Activated CD4-positive, alpha-beta T cell treated with anti-CD3 and anti-CD28 coated beads for 36 hours (primary cell): ENCODE measurements at regions of chr17 and their contacts with region 1.

Region 1: DNA sequence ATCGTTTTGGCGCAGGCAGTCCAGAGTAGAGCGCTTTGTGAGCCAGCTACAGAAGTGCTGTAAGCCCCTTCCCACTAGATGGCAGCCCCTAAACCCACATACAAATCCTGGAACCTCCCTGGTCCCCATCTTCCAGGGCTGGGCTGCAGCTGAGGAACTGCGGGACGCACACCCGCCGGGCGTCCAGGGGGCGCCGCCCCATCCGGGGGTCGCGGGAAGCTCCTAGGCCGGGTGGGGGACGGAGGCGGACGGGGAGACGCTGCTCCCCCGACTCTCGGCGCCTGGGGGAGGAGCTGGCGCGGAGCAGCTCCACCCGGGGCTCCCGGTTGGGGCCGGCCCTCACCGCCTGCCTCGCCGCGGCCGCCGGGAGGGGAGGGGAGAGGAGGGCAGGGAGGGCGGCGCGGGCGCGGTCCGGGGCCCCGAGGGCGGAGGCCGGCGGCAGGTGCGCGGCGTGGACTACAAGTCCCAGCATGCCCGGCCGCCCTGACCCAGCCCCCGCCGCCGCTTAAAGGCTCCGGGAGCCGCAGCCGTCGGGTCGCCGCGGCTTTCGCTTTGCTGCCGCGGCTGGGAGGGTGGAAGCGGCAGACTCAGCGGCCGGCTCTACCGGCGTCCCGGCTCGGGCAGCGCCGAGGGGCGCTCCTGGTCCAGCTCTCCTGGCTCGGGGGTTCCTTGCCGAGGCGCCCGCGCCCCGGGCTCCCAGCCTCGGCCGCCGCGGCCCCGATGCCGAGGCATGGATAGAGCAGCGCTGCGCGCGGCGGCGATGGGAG is at the start of gene KSR1:
- DNase-seq: peak; percentile 92
- ATAC-seq: peak; percentile 93
- H3K4me3 Mint-ChIP-seq: peak within 1 kb of the TSS; percentile 88
- H3K27ac Mint-ChIP-seq: peak within 1 kb of the TSS; percentile 83
- H3K4me1 Mint-ChIP-seq: peaks cover 43% of the 10 kb centered on the region
- H3K27me3 Mint-ChIP-seq: peaks cover 6% of the 10 kb centered on the region
- total RNA-seq, gene KSR1: 96.6 to 113 TPM

Region 2: GRCh38 chr17:27293898-27294688 is 162.0 kb before region 1 on chr17 and contains the start of gene WSB1:
- CTCF ChIA-PET with region 1: no interaction called
- POLR2A ChIA-PET with region 1: interaction called, 3 read pairs
- intact Hi-C with region 1: loop called in 1 of 2 experiments (anchors 5 kb)
- DNase-seq: peak; percentile 96
- ATAC-seq: peak; percentile 86
- H3K4me3 Mint-ChIP-seq: peak within 1 kb of the TSS; percentile 89
- H3K27ac Mint-ChIP-seq: peak within 1 kb of the TSS; percentile 99
- H3K4me1 Mint-ChIP-seq: peaks cover 32% of the 10 kb centered on the region
- H3K27me3 Mint-ChIP-seq: no peaks in the 10 kb centered on the region
- total RNA-seq, gene WSB1: 145 to 190 TPM

Region 3: GRCh38 chr17:27466743-27467375 is 10.8 kb after region 1 on chr17:
- CTCF ChIA-PET with region 1: interaction called, 11 read pairs
- POLR2A ChIA-PET with region 1: interaction called, 20 read pairs
- intact Hi-C with region 1: loop called (anchors 1 kb)
- DNase-seq: peak; percentile 91
- ATAC-seq: peak; percentile 84
- H3K4me3 Mint-ChIP-seq: peak overlapping the region; percentile 71
- H3K27ac Mint-ChIP-seq: peak overlapping the region; percentile 96
- H3K4me1 Mint-ChIP-seq: peaks cover 93% of the 10 kb centered on the region
- H3K27me3 Mint-ChIP-seq: no peaks in the 10 kb centered on the region